ENCODE measurements at regions of chr12 and their contacts with region 1.

Region 1: GRCh38 chr12:49232940-49233841 is 31.7 kb upstream of the TUBA1C start:
- DNase-seq: peak; percentile 28
- H3K4me3 ChIP-seq: peak overlapping the region in 1 of 4 donors; percentile 65
- H3K27ac ChIP-seq: peak overlapping the region; percentile 91 to 94 (median 92)
- H3K4me1 ChIP-seq: peaks cover 9 to 24% (median 12%) of the 10 kb centered on the region in 4 donors
- H3K27me3 ChIP-seq: no peaks in the 10 kb centered on the region
- CTCF ChIP-seq: no peak
- EP300 ChIP-seq: no peak
- POLR2A ChIP-seq: no peak

Region 2: DNA sequence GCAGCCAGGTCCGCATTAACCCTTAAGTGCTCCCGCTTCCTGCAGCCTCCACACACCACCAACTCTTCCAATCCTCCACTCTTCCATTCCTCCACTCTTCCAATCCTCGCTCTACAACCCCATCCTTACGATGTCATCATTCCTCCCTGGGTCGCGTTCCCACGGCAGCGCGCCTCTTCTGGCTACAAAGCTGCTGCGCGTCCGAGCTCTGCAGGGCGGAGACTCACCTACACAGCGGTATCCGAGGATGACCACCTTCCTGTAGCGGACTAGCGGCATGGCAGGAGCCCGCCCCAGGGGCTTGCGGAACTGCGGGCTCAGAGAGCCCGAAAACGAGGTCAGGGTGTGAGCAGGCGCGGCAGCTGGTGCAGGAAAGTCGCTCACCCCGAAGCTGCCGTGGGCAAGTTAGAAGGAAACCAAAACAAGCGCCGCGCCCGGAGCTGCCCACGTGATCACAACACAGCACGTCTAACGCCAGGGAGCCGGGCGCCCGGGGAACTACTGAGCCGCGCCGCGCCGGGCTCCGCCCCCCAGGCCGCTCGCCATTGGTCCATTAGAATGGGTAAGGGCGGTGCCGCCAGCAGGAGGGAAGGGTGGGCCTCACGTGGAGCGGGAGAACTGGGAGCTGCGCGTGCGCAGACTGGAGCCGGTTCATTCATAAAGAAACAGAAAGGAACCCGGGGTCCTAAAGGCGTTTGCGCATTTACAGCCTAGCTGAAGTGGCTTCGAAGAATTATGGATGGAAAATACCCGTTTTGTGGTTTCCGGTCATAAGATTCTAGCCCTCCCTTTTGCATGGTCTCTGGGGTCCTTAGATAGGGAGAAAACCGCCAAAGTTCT is 163.5 kb before region 1 on chr12 and contains the start of gene RHEBL1:
- in situ Hi-C with region 1: loop called in 1 of 4 experiments (anchors 10 kb)
- intact Hi-C with region 1: no loop called
- DNase-seq: peak; percentile 99
- H3K4me3 ChIP-seq: peak within 1 kb of the TSS; percentile 63 to 84 (median 66)
- H3K27ac ChIP-seq: peak within 1 kb of the TSS; percentile 77 to 88 (median 84)
- H3K4me1 ChIP-seq: peaks cover 4 to 13% (median 12%) of the 10 kb centered on the region in 4 donors
- H3K27me3 ChIP-seq: no peaks in the 10 kb centered on the region
- CTCF ChIP-seq: peak in 1 of 5 experiments; percentile 15
- EP300 ChIP-seq: no peak
- POLR2A ChIP-seq: peak; percentile 40
- total RNA-seq, gene RHEBL1: not detected

Region 3: DNA sequence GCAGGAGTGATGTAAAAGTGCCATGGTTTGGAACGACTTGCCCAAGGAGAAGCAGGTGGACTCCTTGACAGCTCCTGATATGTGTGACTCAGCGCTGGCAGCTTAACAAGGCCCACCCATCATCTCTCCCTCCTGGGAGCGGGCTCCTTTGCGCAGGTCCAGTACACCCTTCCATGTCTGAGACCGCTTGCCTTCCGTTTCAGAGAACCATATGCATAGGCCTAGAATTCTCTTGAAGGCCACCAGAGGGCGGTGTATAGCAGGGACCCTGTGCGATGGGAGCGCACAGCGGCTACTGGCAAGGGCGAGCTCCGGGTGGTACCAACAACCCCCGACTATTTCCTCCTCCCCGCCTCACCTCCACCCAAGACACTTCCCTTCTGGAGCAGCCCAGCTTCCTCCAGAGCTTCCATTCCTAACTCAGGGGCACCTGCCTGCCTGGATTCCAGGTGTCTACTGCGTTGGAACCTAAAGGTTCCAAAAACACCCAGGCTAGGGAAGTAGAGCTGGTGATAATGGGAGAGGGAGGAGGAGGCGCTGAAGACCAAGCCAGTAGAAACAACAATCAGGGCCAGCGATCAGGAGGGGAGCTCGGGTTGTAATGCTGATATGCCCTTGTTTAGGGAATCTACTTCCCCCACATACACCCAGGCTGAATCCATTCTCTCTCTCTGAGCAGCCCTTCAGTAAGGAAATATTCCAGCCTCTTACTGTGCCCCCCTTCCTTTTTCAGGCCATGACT is 144.8 kb before region 1 on chr12:
- in situ Hi-C with region 1: loop called in 3 of 4 experiments (anchors 10 to 25 kb)
- intact Hi-C with region 1: loop called (anchors 10 kb)
- DNase-seq: peak; percentile 73
- H3K4me3 ChIP-seq: no peak overlapping the region
- H3K27ac ChIP-seq: no peak overlapping the region
- H3K4me1 ChIP-seq: peaks cover 21 to 42% (median 29%) of the 10 kb centered on the region in 4 donors
- H3K27me3 ChIP-seq: peaks cover 51% of the 10 kb centered on the region
- CTCF ChIP-seq: peak; percentile 77 to 90 (median 87)
- EP300 ChIP-seq: no peak
- POLR2A ChIP-seq: no peak

Region 4: DNA sequence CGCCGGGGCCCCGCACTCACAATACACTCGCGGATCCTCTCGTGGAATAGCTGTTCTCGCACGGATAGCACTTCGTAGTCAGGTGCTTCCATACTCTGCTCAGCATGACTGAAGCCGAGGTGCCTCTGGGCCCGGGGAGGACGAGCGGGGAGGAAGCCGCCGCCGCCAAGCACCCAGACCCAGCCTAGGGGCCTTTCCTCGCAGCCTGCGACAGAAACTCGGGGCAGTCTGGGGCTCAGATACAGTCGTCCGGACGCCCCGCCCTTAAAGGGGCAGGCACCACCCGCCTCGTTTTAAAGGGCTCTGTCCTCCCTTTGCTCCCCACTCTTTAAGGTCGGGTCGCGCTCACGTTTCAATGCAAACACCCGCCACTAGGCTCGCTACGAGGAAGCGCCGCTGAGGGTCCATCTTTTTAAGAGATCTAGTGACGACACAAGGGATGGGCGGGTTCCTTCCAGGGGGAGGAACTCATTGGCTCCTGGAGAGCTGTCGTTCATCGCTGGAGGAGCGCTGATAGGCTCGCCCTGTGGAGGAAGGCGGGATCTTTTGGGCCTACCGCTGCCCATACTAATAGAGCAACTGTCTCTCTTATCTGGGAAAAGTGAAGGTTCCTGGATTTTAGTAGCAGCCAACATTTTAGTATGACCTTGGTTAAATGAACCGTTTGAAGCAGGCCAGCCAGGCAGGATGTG is 122.6 kb before region 1 on chr12 and contains the start of gene LMBR1L:
- in situ Hi-C with region 1: no loop called
- intact Hi-C with region 1: no loop called
- DNase-seq: peak; percentile 98
- H3K4me3 ChIP-seq: peak within 1 kb of the TSS; percentile 64 to 92 (median 88)
- H3K27ac ChIP-seq: peak within 1 kb of the TSS; percentile 96 to 99 (median 97)
- H3K4me1 ChIP-seq: peaks cover 21 to 47% (median 36%) of the 10 kb centered on the region in 4 donors
- H3K27me3 ChIP-seq: no peaks in the 10 kb centered on the region
- CTCF ChIP-seq: peak; percentile 49 to 86 (median 60)
- EP300 ChIP-seq: no peak
- POLR2A ChIP-seq: peak; percentile 90
- total RNA-seq, gene LMBR1L: 72.6 to 125 (median 82.1) TPM

Region 5: GRCh38 chr12:49130151-49131050 is 102.8 kb before region 1 on chr12:
- in situ Hi-C with region 1: no loop called
- intact Hi-C with region 1: loop called (anchors 1 kb)
- DNase-seq: peak; percentile 96
- H3K4me3 ChIP-seq: peak overlapping the region; percentile 79 to 94 (median 87)
- H3K27ac ChIP-seq: peak overlapping the region; percentile 98 to 100 (median 100)
- H3K4me1 ChIP-seq: peaks cover 11 to 33% (median 19%) of the 10 kb centered on the region in 4 donors
- H3K27me3 ChIP-seq: no peaks in the 10 kb centered on the region
- CTCF ChIP-seq: peak; percentile 81 to 96 (median 93)
- EP300 ChIP-seq: no peak
- POLR2A ChIP-seq: peak; percentile 87

Region 6: GRCh38 chr12:49188914-49189367 is 44.2 kb before region 1 on chr12 and contains the start of gene TUBA1A:
- in situ Hi-C with region 1: no loop called
- intact Hi-C with region 1: loop called (anchors 1 kb)
- DNase-seq: peak; percentile 89
- H3K4me3 ChIP-seq: peak within 1 kb of the TSS; percentile 73 to 86 (median 81)
- H3K27ac ChIP-seq: peak within 1 kb of the TSS; percentile 97 to 98 (median 98)
- H3K4me1 ChIP-seq: peaks cover 3 to 28% (median 8%) of the 10 kb centered on the region in 4 donors
- H3K27me3 ChIP-seq: peaks cover 5% of the 10 kb centered on the region
- CTCF ChIP-seq: no peak
- EP300 ChIP-seq: no peak
- POLR2A ChIP-seq: peak; percentile 94
- total RNA-seq, gene TUBA1A: 77.1 to 201 (median 92.6) TPM